Right cardiac atrium (tissue), 5 donors: ENCODE measurements at regions of chr4 and their contacts with region 1.

Region 1: GRCh38 chr4:122577808-122578781 is 42.8 kb downstream of the IL21 start:
- DNase-seq: peak in 1 of 3 donors; percentile 31
- ATAC-seq: no peak
- H3K4me3 ChIP-seq: no peak overlapping the region
- H3K27ac ChIP-seq: no peak overlapping the region
- H3K4me1 ChIP-seq: no peaks in the 10 kb centered on the region
- H3K27me3 ChIP-seq: no peaks in the 10 kb centered on the region

Region 2: GRCh38 chr4:121900132-121900983 is 677.7 kb before region 1 on chr4:
- intact Hi-C with region 1: loop called in 1 of 4 experiments (anchors 10 kb)
- DNase-seq: no peak
- ATAC-seq: peak; percentile 52 to 70
- H3K4me3 ChIP-seq: no peak overlapping the region
- H3K27ac ChIP-seq: no peak overlapping the region
- H3K4me1 ChIP-seq: no peaks in the 10 kb centered on the region
- H3K27me3 ChIP-seq: no peaks in the 10 kb centered on the region